ENCODE measurements at regions of chr7 and their contacts with region 1.

Region 1: DNA sequence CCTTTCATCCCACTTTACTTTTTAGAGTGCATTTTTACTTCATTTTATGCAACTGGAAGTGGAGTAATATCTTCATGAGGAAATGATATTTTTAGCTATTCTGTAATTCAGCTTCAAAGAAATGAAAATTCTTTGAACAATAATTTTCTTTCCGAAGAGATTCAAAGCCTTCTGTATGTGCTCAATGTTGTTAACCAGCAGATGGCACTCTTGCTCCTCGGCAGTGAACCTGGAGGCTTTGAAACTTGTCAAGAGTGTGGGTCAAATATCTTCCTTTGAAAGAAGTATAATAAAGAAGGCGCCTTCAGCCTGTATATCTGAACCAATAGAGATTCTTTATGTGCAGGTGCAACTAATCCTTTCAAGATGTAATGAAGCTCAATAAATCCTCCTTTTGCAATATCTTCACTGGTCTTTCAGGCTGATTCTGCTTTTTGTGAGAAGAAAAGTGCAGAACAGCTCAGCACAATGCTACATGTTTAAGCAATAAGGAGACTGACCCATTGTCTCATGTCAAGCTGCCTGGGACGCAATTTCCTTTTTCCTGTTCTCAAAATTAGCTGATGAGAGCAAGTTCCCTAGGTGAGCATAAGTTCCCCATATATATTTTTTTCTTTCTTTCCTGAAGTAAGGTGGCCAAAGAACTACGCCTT is 258.4 kb downstream of the SEMA3A start:
- DNase-seq: peak; percentile 19 to 81
- ATAC-seq: peak; percentile 85 to 91; a peak in 5 of 6 replicates
- H3K4me3 ChIP-seq: no peak overlapping the region
- H3K27ac ChIP-seq: peak overlapping the region in 1 of 2 experiments; percentile 7; a peak in 1 of 6 replicates
- H3K4me1 ChIP-seq: no peaks in the 10 kb centered on the region
- CTCF ChIP-seq: peak; percentile 98
- EP300 ChIP-seq: no peak
- POLR2A ChIP-seq: no peak
- RAD21 ChIP-seq: peak; percentile 97

Region 2: GRCh38 chr7:83947260-83947659 is 11.1 kb after region 1 on chr7:
- CTCF ChIA-PET with region 1: interaction called, 52 read pairs
- POLR2A ChIA-PET with region 1: no interaction called
- DNase-seq: peak; percentile 6 to 33
- ATAC-seq: peak; percentile 70 to 78; a peak in 5 of 6 replicates
- H3K4me3 ChIP-seq: no peak overlapping the region
- H3K27ac ChIP-seq: no peak overlapping the region
- H3K4me1 ChIP-seq: no peaks in the 10 kb centered on the region
- CTCF ChIP-seq: no peak
- EP300 ChIP-seq: no peak
- POLR2A ChIP-seq: no peak
- RAD21 ChIP-seq: no peak

Region 3: DNA sequence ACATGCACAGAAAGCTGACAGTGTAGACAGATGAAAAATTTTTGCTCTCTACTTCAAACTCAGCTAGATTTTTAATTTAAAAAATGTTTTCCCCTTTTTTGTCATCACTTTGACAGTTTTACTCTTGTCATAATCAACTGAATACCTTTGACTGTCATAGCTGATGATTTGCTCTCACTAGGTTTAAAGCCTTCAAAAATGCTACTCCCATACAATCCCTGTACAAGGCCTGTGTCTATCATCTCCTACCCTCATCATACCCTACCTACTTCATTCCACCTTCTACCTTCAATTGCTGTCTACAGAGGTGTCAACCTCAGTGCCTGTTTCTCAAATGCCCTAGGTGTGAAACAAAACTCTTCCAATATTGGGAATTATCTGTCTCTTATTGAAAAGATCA is 28.1 kb after region 1 on chr7:
- CTCF ChIA-PET with region 1: interaction called, 15 read pairs
- POLR2A ChIA-PET with region 1: no interaction called
- DNase-seq: no peak
- ATAC-seq: no peak
- H3K4me3 ChIP-seq: no peak overlapping the region
- H3K27ac ChIP-seq: no peak overlapping the region
- H3K4me1 ChIP-seq: no peaks in the 10 kb centered on the region
- CTCF ChIP-seq: no peak
- EP300 ChIP-seq: no peak
- POLR2A ChIP-seq: no peak
- RAD21 ChIP-seq: no peak

Region 4: DNA sequence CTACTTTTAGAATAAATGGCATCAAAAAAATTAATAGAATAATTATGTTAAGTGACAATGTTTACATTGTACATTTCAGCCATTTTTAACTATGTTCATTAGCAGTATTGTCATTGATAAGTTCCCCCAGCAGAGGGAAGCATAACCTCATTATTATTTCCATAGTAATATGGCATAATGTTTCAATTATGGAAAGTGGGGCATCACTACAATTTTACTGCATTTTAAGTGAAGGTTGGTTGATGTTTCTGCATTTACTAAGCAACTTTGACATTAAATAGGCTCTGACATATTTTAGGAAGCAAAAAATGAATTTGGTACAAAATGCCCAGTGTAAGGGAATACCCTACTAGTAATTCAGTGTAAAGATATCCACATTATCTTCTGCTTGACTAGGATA is 40.1 kb after region 1 on chr7:
- CTCF ChIA-PET with region 1: interaction called, 11 read pairs
- POLR2A ChIA-PET with region 1: no interaction called
- DNase-seq: peak; percentile 6 to 35
- ATAC-seq: peak in 1 of 2 experiments; percentile 69; a peak in 3 of 6 replicates
- H3K4me3 ChIP-seq: no peak overlapping the region
- H3K27ac ChIP-seq: no peak overlapping the region
- H3K4me1 ChIP-seq: no peaks in the 10 kb centered on the region
- CTCF ChIP-seq: peak; percentile 84
- EP300 ChIP-seq: no peak
- POLR2A ChIP-seq: no peak
- RAD21 ChIP-seq: peak; percentile 94 to 97

Region 5: GRCh38 chr7:84027678-84028077 is 91.5 kb after region 1 on chr7:
- CTCF ChIA-PET with region 1: no interaction called
- POLR2A ChIA-PET with region 1: no interaction called
- DNase-seq: no peak
- ATAC-seq: no peak
- H3K4me3 ChIP-seq: no peak overlapping the region
- H3K27ac ChIP-seq: no peak overlapping the region
- H3K4me1 ChIP-seq: peaks cover 35% of the 10 kb centered on the region
- CTCF ChIP-seq: no peak
- EP300 ChIP-seq: no peak
- POLR2A ChIP-seq: no peak
- RAD21 ChIP-seq: no peak

Region 6: GRCh38 chr7:84113286-84113685 is 177.1 kb after region 1 on chr7:
- CTCF ChIA-PET with region 1: no interaction called
- POLR2A ChIA-PET with region 1: no interaction called
- DNase-seq: no peak
- ATAC-seq: no peak
- H3K4me3 ChIP-seq: no peak overlapping the region
- H3K27ac ChIP-seq: no peak overlapping the region
- H3K4me1 ChIP-seq: peaks cover 4% of the 10 kb centered on the region; the same call in 1 of the 3 replicates
- CTCF ChIP-seq: no peak
- EP300 ChIP-seq: no peak
- POLR2A ChIP-seq: no peak
- RAD21 ChIP-seq: no peak

Region 7: GRCh38 chr7:85030893-85031292 is 1094.7 kb after region 1 on chr7:
- CTCF ChIA-PET with region 1: interaction called, 354 read pairs
- POLR2A ChIA-PET with region 1: no interaction called
- DNase-seq: peak; percentile 1 to 28
- ATAC-seq: peak; percentile 34 to 62; a peak in 3 of 6 replicates
- H3K4me3 ChIP-seq: no peak overlapping the region
- H3K27ac ChIP-seq: no peak overlapping the region
- H3K4me1 ChIP-seq: no peaks in the 10 kb centered on the region
- CTCF ChIP-seq: peak; percentile 76
- EP300 ChIP-seq: no peak
- POLR2A ChIP-seq: no peak
- RAD21 ChIP-seq: peak; percentile 65 to 71